CD8-positive, alpha-beta T cell (primary cell): ENCODE measurements at regions of chr2 and their contacts with region 1.

Region 1: GRCh38 chr2:156332534-156333273 is at the start of gene NR4A2:
- DNase-seq: peak; percentile 82 to 98 (median 89)
- ATAC-seq: peak; percentile 60
- H3K4me3 ChIP-seq: peak within 1 kb of the TSS; percentile 83 to 88
- H3K4me3 Mint-ChIP-seq: peak within 1 kb of the TSS; percentile 90
- H3K27ac ChIP-seq: peak within 1 kb of the TSS; percentile 91 to 99
- H3K27ac Mint-ChIP-seq: peak within 1 kb of the TSS; percentile 98
- H3K4me1 ChIP-seq: peaks cover 33% of the 10 kb centered on the region
- H3K4me1 Mint-ChIP-seq: peaks cover 44% of the 10 kb centered on the region
- H3K27me3 ChIP-seq: peaks cover 0 to 6% of the 10 kb centered on the region in 2 experiments
- H3K27me3 Mint-ChIP-seq: peaks cover 23% of the 10 kb centered on the region
- CTCF ChIP-seq: no peak
- total RNA-seq, gene NR4A2: 777 to 796 TPM

Region 2: DNA sequence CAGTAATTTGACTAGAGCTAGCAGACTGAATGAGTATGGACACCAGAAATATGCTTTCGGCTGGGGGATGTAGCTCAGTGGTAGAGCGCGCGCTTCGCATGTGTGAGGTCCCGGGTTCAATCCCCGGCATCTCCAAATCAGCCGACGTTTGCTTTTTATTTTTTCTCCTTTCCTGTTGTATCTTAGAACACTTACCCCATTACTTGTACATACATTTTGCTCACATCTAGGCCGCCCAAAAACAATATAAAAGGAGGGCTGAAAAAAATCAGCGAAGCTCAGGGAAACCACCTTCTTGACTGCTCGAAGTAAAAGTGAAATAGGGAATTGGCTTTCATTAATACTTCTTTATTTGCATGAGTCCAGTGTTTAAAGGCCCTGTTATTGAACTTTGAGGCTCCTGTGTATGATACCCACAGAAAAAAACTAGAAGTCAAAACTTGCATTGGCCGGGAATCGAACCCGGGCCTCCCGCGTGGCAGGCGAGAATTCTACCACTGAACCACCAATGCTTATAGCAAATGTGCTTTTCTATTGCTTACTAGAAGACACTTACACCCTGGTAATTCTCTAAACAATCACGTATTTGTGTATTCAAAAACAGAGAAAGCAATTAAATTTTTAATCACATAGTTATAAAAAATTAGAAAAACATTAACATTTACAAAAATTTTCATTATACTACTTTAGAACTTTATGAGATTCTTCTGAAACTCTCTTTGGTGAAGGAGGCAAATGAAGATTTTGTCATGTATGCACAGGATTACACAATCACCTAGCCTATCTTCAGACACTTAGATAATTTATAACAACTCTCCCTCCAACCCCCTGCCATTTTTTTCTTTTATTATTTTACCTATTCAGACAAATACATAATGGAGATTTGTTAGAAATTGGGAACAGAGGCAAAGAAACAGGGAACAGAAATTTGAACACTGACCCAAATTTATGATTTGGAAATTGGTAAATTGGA is 68.3 kb after region 1 on chr2:
- CTCF ChIA-PET with region 1: interaction called, 21 read pairs
- POLR2A ChIA-PET with region 1: interaction called, 31 read pairs
- intact Hi-C with region 1: loop called in 1 of 2 experiments (anchors 1 kb)
- DNase-seq: peak; percentile 62 to 92 (median 81)
- ATAC-seq: peak; percentile 79
- H3K4me3 ChIP-seq: peak overlapping the region; percentile 74 to 85
- H3K4me3 Mint-ChIP-seq: peak overlapping the region; percentile 88
- H3K27ac ChIP-seq: peak overlapping the region; percentile 80 to 93
- H3K27ac Mint-ChIP-seq: peak overlapping the region; percentile 95
- H3K4me1 ChIP-seq: peaks cover 4% of the 10 kb centered on the region
- H3K4me1 Mint-ChIP-seq: peaks cover 28% of the 10 kb centered on the region
- H3K27me3 ChIP-seq: no peaks in the 10 kb centered on the region
- H3K27me3 Mint-ChIP-seq: no peaks in the 10 kb centered on the region
- CTCF ChIP-seq: no peak

Region 3: DNA sequence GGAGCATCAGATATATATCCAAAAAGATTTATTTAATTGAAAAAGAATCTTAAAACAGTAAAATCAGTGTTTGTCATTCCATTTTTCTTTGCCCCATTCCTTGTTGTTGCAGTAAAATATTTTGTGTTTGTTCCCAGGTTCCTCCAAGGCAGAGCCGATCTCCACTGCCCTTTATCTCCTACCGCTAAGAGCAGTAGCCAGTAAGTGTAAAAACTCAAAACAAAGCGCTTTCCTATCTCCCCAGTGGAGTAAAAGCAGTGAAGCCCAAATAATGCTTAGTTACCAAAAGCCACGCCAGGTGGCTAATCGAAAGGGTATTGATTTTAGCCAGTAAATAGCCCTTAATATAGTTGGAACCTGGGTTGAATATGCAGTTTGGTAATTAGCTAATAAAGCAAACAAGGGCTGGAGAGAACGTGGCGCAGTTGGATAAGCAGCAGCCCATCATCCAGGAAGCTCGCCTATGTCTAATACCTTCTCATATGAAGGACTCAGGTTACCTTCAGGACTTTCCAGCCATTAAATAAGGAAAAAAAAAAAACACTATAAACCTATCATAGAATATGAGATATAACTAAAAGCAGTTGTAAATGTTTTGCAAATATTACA is 91.1 kb after region 1 on chr2:
- CTCF ChIA-PET with region 1: no interaction called
- POLR2A ChIA-PET with region 1: no interaction called
- intact Hi-C with region 1: no loop called
- DNase-seq: no peak
- ATAC-seq: no peak
- H3K4me3 ChIP-seq: no peak overlapping the region
- H3K4me3 Mint-ChIP-seq: no peak overlapping the region
- H3K27ac ChIP-seq: no peak overlapping the region
- H3K27ac Mint-ChIP-seq: no peak overlapping the region
- H3K4me1 ChIP-seq: no peaks in the 10 kb centered on the region
- H3K4me1 Mint-ChIP-seq: no peaks in the 10 kb centered on the region
- H3K27me3 ChIP-seq: no peaks in the 10 kb centered on the region
- H3K27me3 Mint-ChIP-seq: peaks cover 12% of the 10 kb centered on the region
- CTCF ChIP-seq: no peak

Region 4: GRCh38 chr2:156483741-156484176 is 151.1 kb after region 1 on chr2:
- CTCF ChIA-PET with region 1: interaction called, 4 read pairs
- POLR2A ChIA-PET with region 1: no interaction called
- intact Hi-C with region 1: loop called in 1 of 2 experiments (anchors 5 kb)
- DNase-seq: no peak
- ATAC-seq: no peak
- H3K4me3 ChIP-seq: no peak overlapping the region
- H3K4me3 Mint-ChIP-seq: no peak overlapping the region
- H3K27ac ChIP-seq: no peak overlapping the region
- H3K27ac Mint-ChIP-seq: no peak overlapping the region
- H3K4me1 ChIP-seq: no peaks in the 10 kb centered on the region
- H3K4me1 Mint-ChIP-seq: peaks cover 23% of the 10 kb centered on the region
- H3K27me3 ChIP-seq: no peaks in the 10 kb centered on the region
- H3K27me3 Mint-ChIP-seq: no peaks in the 10 kb centered on the region
- CTCF ChIP-seq: no peak

Region 5: GRCh38 chr2:157413326-157414035 is 1080.8 kb after region 1 on chr2:
- CTCF ChIA-PET with region 1: no interaction called
- POLR2A ChIA-PET with region 1: no interaction called
- intact Hi-C with region 1: loop called in 1 of 2 experiments (anchors 10 kb)
- DNase-seq: peak in 7 of 9 experiments; percentile 41 to 91 (median 64)
- ATAC-seq: peak; percentile 76
- H3K4me3 ChIP-seq: peak overlapping the region in 1 of 2 experiments; percentile 2
- H3K4me3 Mint-ChIP-seq: peak overlapping the region; percentile 44
- H3K27ac ChIP-seq: peak overlapping the region; percentile 49 to 80
- H3K27ac Mint-ChIP-seq: peak overlapping the region; percentile 91
- H3K4me1 ChIP-seq: peaks cover 95% of the 10 kb centered on the region
- H3K4me1 Mint-ChIP-seq: peaks cover 89% of the 10 kb centered on the region
- H3K27me3 ChIP-seq: no peaks in the 10 kb centered on the region
- H3K27me3 Mint-ChIP-seq: no peaks in the 10 kb centered on the region
- CTCF ChIP-seq: no peak